T-cell (primary cell): ENCODE measurements at regions of chr7 and their contacts with region 1.

Region 1: DNA sequence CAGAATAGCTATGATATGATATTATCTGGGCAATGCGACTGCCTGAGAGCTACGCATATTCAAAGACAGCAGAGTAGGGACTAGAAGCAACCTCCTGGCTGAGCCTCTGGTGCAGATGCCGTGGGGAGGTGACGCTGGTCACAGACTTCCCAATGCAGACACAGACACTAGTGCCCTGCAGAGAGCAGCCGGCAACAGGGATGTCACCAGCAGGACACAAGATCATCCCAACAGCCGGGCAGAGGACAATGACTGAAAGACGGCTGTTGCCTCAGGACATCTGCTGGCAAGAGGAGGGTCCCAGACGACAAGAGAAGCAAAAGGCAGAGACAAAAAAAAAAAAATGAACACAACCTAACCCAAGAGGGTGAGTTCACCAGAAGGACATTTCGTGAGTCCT is 104.6 kb downstream of the CALN1 start:
- DNase-seq: no peak
- ATAC-seq: no peak
- H3K4me3 ChIP-seq: no peak overlapping the region
- H3K4me3 Mint-ChIP-seq: no peak overlapping the region
- H3K27ac ChIP-seq: no peak overlapping the region
- H3K27ac Mint-ChIP-seq: no peak overlapping the region
- H3K4me1 ChIP-seq: no peaks in the 10 kb centered on the region
- H3K4me1 Mint-ChIP-seq: no peaks in the 10 kb centered on the region
- H3K27me3 ChIP-seq: peaks cover 0 to 11% of the 10 kb centered on the region in 2 experiments
- H3K27me3 Mint-ChIP-seq: no peaks in the 10 kb centered on the region

Region 2: DNA sequence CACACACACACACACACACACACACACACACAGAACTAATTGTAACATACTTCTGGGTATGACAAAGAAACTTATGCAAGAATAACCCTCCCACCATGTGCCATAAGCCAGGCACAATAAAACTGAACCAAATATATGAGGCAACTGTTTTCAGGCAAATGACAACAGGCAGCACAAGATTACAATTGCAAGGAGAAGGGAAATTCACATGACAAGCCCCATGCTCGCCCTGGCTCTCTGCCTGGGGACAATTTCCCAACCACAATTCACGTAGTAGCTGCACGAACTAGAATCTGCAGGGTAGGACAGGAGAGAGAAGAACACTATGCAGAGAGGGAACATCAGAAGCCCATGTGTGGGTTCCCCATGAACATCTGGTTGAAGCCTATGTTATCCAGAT is 38.8 kb before region 1 on chr7:
- CTCF ChIA-PET with region 1: no interaction called
- POLR2A ChIA-PET with region 1: no interaction called
- DNase-seq: no peak
- ATAC-seq: no peak
- H3K4me3 ChIP-seq: no peak overlapping the region
- H3K4me3 Mint-ChIP-seq: no peak overlapping the region
- H3K27ac ChIP-seq: no peak overlapping the region
- H3K27ac Mint-ChIP-seq: no peak overlapping the region
- H3K4me1 ChIP-seq: no peaks in the 10 kb centered on the region
- H3K4me1 Mint-ChIP-seq: no peaks in the 10 kb centered on the region
- H3K27me3 ChIP-seq: no peaks in the 10 kb centered on the region
- H3K27me3 Mint-ChIP-seq: no peaks in the 10 kb centered on the region

Region 3: GRCh38 chr7:72334066-72334465 is 26.5 kb after region 1 on chr7:
- CTCF ChIA-PET with region 1: no interaction called
- POLR2A ChIA-PET with region 1: interaction called in 1 of 2 experiments, 10 read pairs
- DNase-seq: no peak
- ATAC-seq: no peak
- H3K4me3 ChIP-seq: no peak overlapping the region
- H3K4me3 Mint-ChIP-seq: no peak overlapping the region
- H3K27ac ChIP-seq: no peak overlapping the region
- H3K27ac Mint-ChIP-seq: no peak overlapping the region
- H3K4me1 ChIP-seq: no peaks in the 10 kb centered on the region
- H3K4me1 Mint-ChIP-seq: peaks cover 0 to 7% (median 0%) of the 10 kb centered on the region in 3 donors
- H3K27me3 ChIP-seq: peaks cover 0 to 24% of the 10 kb centered on the region in 2 experiments
- H3K27me3 Mint-ChIP-seq: peaks cover 23 to 25% of the 10 kb centered on the region in 2 donors

Region 4: DNA sequence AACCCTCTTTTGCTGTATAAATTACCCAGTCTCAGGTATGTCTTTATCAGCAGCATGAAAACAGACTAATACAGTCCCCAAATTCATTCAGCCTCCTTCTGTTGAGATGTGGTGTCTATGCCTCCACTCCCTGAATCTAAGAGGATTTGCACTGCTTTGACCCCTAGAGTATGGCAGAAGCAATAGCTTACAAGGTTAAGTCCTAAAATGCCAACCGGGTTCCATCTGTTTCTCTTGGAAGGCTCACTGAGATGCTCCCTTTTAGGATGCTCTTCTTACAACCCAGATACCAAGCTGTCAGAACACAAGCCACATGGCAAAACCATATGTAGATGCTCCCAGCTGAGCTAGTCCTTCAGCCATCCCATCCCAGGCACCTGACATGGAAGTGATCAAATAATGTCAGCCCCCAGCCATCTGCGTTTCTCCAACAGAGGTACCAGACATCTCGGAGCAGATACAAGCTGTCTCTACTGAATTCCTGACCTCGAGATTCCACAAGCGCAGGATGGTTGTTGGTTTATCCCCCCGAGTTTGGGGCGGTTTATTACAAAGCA is 84.3 kb after region 1 on chr7:
- CTCF ChIA-PET with region 1: no interaction called
- POLR2A ChIA-PET with region 1: no interaction called
- DNase-seq: no peak
- ATAC-seq: no peak
- H3K4me3 ChIP-seq: no peak overlapping the region
- H3K4me3 Mint-ChIP-seq: no peak overlapping the region
- H3K27ac ChIP-seq: no peak overlapping the region
- H3K27ac Mint-ChIP-seq: no peak overlapping the region
- H3K4me1 ChIP-seq: no peaks in the 10 kb centered on the region
- H3K4me1 Mint-ChIP-seq: no peaks in the 10 kb centered on the region
- H3K27me3 ChIP-seq: no peaks in the 10 kb centered on the region
- H3K27me3 Mint-ChIP-seq: peaks cover 0 to 2% of the 10 kb centered on the region in 2 donors